Esophagus muscularis mucosa (tissue), 4 donors: ENCODE measurements at regions of chr16 and their contacts with region 1.

Region 1: DNA sequence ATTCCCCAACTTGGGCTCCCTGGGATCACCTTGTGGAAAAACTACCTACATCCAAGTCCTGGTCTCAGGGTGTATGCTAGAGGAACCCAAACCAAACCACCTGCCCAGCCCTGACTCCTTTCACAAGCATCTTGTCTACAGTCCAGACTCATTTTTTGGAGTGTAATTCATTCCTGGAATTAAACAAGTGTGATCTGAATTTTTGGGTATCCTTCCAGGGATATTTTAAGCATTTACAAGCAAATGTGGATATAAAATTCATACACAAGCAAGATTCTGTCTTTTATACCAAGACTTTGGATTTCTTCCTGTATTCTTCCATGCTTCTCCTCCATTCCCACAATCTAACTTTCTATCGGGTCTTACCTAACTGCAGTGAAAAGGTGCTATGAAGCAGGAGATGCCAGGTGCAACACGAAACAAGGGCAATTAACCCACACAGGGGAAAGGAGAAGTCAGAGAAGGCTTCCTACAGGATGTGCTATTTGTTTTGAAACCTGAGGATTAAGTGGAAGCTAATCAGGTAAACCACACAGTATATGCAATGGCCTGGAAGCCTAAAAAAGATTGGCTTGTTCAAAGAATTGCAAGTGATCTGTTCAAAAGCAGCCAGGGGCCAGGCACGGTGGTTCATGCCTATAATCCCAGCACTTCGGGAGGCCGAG is 417.2 kb upstream of the C16orf82 start:
- DNase-seq: peak; percentile 64
- H3K4me3 ChIP-seq: no peak overlapping the region
- H3K27ac ChIP-seq: no peak overlapping the region
- H3K4me1 ChIP-seq: no peaks in the 10 kb centered on the region
- H3K27me3 ChIP-seq: no peaks in the 10 kb centered on the region
- CTCF ChIP-seq: no peak
- EP300 ChIP-seq: no peak
- POLR2A ChIP-seq: no peak

Region 2: GRCh38 chr16:26598061-26598460 is 51.5 kb before region 1 on chr16:
- intact Hi-C with region 1: loop called (anchors 10 kb)
- DNase-seq: peak; percentile 45
- H3K4me3 ChIP-seq: no peak overlapping the region
- H3K27ac ChIP-seq: no peak overlapping the region
- H3K4me1 ChIP-seq: no peaks in the 10 kb centered on the region
- H3K27me3 ChIP-seq: peaks cover 0 to 5% (median 0%) of the 10 kb centered on the region in 4 donors
- CTCF ChIP-seq: no peak
- EP300 ChIP-seq: no peak
- POLR2A ChIP-seq: no peak